ENCODE measurements at regions of chr1 and their contacts with region 1.

Region 1: GRCh38 chr1:156225677-156226014 is 12.8 kb downstream of the PMF1 start:
- DNase-seq: no peak
- ATAC-seq: no peak
- H3K4me3 ChIP-seq: no peak overlapping the region
- H3K4me3 Mint-ChIP-seq: no peak overlapping the region
- H3K27ac ChIP-seq: no peak overlapping the region
- H3K27ac Mint-ChIP-seq: peak overlapping the region in 1 of 2 donors; percentile 23
- H3K4me1 ChIP-seq: peaks cover 4% of the 10 kb centered on the region
- H3K4me1 Mint-ChIP-seq: peaks cover 0 to 19% of the 10 kb centered on the region in 2 donors
- H3K27me3 ChIP-seq: no peaks in the 10 kb centered on the region
- H3K27me3 Mint-ChIP-seq: no peaks in the 10 kb centered on the region
- CTCF ChIP-seq: peak; percentile 20

Region 2: DNA sequence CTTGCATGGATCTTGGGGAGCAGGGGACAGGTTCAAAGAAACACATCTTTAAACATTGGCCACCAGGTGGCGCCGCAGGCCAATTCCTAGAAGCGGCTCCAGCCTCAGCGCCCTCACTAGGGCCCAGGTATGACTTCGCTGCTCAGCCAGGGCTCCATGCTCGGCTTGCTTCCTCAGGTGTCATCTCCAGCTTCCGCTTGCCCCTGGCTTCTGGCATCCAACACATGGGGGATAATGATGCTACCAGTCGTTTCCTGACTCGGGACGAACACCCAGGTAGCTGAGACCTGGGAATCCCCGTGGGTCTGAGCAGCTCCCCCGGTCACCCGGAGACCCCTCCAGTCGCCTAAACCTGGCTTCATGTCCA is 134.8 kb before region 1 on chr1:
- intact Hi-C with region 1: loop called (anchors 1 kb)
- DNase-seq: peak; percentile 83 to 94
- ATAC-seq: peak; percentile 84 to 99 (median 95)
- H3K4me3 ChIP-seq: no peak overlapping the region
- H3K4me3 Mint-ChIP-seq: no peak overlapping the region
- H3K27ac ChIP-seq: no peak overlapping the region
- H3K27ac Mint-ChIP-seq: no peak overlapping the region
- H3K4me1 ChIP-seq: peaks cover 11% of the 10 kb centered on the region
- H3K4me1 Mint-ChIP-seq: peaks cover 0 to 10% of the 10 kb centered on the region in 2 donors
- H3K27me3 ChIP-seq: no peaks in the 10 kb centered on the region
- H3K27me3 Mint-ChIP-seq: peaks cover 11 to 12% of the 10 kb centered on the region in 2 donors
- CTCF ChIP-seq: peak; percentile 89